ENCODE measurements at regions of chr6 and their contacts with region 1.

Region 1: GRCh38 chr6:11414176-11414963 is 123.2 kb upstream of the TMEM170B start:
- DNase-seq: peak; percentile 61
- ATAC-seq: peak; percentile 25
- H3K4me3 Mint-ChIP-seq: no peak overlapping the region
- H3K27ac Mint-ChIP-seq: no peak overlapping the region
- H3K4me1 Mint-ChIP-seq: peaks cover 40% of the 10 kb centered on the region
- H3K27me3 Mint-ChIP-seq: no peaks in the 10 kb centered on the region
- CTCF ChIP-seq: no peak

Region 2: DNA sequence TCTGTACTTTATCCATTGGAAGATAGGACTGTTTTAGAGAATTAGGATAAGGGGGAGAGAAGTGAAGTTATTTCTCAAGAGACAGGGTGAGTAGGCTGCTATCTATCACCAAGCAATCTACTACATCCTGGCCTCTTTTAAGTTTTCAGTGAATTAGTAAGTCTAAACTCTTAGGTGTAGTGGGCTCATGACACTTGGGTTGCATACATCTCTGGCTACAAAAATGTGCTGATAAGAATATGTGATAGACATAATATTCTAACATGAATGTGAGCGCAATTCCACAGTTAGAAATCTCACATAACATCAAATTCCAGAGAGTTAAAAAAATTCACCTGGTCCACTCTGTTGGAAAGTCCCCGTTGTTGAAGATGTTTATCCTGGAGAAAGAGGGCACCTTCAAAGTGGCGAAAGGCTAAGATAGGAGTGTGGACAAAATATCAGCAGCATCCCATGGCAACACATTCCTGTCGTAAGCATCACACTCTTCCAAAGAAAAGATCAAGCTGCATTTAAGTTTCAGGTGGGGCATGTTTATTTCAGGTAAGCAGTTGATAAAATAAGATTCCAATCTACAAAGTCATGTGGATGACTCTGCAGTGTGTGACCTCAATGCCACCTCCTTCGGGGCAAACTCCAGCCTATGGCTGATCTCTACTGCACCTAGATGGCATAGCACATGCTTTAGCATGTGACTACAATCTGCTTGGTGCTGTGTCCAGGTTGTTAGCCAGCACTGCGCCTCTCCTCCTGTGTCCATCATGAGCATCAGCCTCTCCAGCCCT is 70.2 kb before region 1 on chr6:
- CTCF ChIA-PET with region 1: interaction called, 3 read pairs
- POLR2A ChIA-PET with region 1: no interaction called
- intact Hi-C with region 1: loop called (anchors 5 kb)
- DNase-seq: no peak
- ATAC-seq: peak; percentile 22
- H3K4me3 Mint-ChIP-seq: no peak overlapping the region
- H3K27ac Mint-ChIP-seq: peak overlapping the region; percentile 89
- H3K4me1 Mint-ChIP-seq: peaks cover 90% of the 10 kb centered on the region
- H3K27me3 Mint-ChIP-seq: no peaks in the 10 kb centered on the region
- CTCF ChIP-seq: no peak